ENCODE measurements at regions of chr9 and their contacts with region 1.

Region 1: DNA sequence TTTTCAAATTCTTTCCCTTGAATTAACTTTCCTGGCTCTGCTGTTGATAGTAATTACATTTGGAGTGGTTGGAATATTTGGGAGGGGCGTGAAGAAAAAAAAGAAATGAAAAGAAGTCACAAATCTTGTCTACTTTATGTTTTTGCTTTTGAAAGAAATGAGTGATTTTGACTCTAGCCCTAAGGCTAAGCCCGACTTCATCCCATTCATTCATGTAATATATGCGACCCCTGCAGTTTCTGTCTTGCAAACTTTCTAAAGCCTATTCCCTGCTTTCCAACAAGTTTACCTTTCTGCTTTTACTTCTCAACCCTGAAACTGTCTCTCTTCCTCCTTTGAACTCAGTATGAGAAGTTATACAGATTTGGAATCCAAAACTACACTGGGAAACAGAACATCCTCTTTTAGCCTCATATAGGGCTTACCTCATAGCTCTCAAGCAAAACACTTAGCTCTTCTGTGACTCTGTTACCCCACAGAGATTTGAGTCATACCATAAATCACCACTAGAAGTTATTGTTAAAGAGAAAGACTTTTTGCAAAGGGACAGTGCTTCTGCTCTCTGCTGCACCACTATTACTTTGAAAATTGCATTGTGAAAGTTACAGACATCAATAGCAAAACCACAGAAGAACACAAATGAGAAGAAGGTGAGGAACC is 1.6 kb downstream of the CFAP95 start:
- DNase-seq: no peak
- H3K4me3 ChIP-seq: peak overlapping the region in 1 of 4 experiments; percentile 60; a peak in 3 of 8 replicates
- H3K27ac ChIP-seq: no peak overlapping the region
- H3K4me1 ChIP-seq: peaks cover 8 to 23% (median 17%) of the 10 kb centered on the region in 4 experiments; a peak in 6 of 7 replicates
- H3K27me3 ChIP-seq: no peaks in the 10 kb centered on the region
- CTCF ChIP-seq: no peak
- EP300 ChIP-seq: no peak
- POLR2A ChIP-seq: no peak
- RAD21 ChIP-seq: 0 out of 4 replicates have a peak, but pooled peaks of 1 of the 2 experiments have one; percentile 13

Region 2: GRCh38 chr9:69809304-69809863 is 12.8 kb before region 1 on chr9:
- CTCF ChIA-PET with region 1: interaction called, 16 read pairs
- POLR2A ChIA-PET with region 1: interaction called, 3 read pairs
- DNase-seq: peak; percentile 19 to 75
- H3K4me3 ChIP-seq: no peak overlapping the region
- H3K27ac ChIP-seq: no peak overlapping the region
- H3K4me1 ChIP-seq: no peaks in the 10 kb centered on the region
- H3K27me3 ChIP-seq: no peaks in the 10 kb centered on the region
- CTCF ChIP-seq: peak; percentile 25 to 64 (median 58)
- EP300 ChIP-seq: no peak
- POLR2A ChIP-seq: no peak
- RAD21 ChIP-seq: peak; percentile 47 to 70

Region 3: GRCh38 chr9:69834591-69835184 is 12.5 kb after region 1 on chr9:
- CTCF ChIA-PET with region 1: interaction called, 15 read pairs
- POLR2A ChIA-PET with region 1: no interaction called
- DNase-seq: no peak
- H3K4me3 ChIP-seq: no peak overlapping the region
- H3K27ac ChIP-seq: no peak overlapping the region
- H3K4me1 ChIP-seq: peaks cover 0 to 5% (median 3%) of the 10 kb centered on the region in 4 experiments; a peak in 4 of 7 replicates
- H3K27me3 ChIP-seq: no peaks in the 10 kb centered on the region
- CTCF ChIP-seq: no peak
- EP300 ChIP-seq: no peak
- POLR2A ChIP-seq: no peak
- RAD21 ChIP-seq: no peak

Measured in H1 (cell line).